Adrenal gland (tissue), 19 donors: ENCODE measurements at regions of chr11 and their contacts with region 1.

Region 1: DNA sequence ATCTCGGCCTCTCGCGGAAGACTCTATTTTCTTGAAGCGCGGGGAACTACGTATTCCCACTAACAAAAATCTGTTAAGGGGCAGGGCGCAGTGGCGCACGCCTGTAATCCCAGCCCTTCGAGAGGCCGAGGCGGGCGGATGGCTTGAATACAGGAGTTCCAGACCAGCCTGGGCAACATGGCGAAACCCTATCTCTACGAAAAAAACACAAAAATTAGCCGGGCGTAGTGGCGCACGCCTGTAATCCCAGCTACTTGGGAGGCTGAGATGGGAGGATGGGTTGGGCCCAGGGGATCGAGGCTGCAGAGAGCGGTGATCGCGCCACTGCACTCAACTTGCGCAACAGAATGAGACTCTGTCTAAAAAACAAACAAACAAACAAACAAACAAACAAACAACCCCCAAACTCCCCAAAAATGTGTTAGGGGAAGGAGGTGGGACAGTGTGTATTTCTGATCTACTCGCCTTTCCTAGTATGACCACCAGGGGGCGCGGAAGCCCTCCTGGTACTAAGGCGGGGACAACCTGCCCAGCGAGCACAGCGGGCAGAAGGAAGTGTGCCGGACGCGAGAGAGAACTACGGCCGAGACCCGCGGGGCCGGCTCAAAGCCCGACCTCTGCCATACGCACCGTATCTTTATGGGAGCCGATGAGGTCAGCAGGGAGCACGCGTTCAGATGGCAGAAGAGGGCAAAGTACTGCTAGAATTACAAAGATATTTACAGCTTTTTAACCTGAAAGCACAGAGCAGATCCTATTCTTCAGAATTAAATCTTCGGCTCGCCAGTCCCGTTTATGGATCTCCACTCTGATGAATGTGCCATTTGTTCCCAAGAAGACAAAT is 1.3 kb upstream of the STX3 start:
- DNase-seq: peak; percentile 82 to 93 (median 89)
- H3K4me3 ChIP-seq: peak overlapping the region in 3 of 4 donors; percentile 89 to 97 (median 92)
- H3K27ac ChIP-seq: peak overlapping the region in 3 of 5 donors; percentile 95 to 98 (median 97)
- H3K4me1 ChIP-seq: peaks cover 12 to 17% of the 10 kb centered on the region in 2 donors
- H3K27me3 ChIP-seq: no peaks in the 10 kb centered on the region
- CTCF ChIP-seq: peak; percentile 89 to 97 (median 95)
- POLR2A ChIP-seq: no peak

Region 2: DNA sequence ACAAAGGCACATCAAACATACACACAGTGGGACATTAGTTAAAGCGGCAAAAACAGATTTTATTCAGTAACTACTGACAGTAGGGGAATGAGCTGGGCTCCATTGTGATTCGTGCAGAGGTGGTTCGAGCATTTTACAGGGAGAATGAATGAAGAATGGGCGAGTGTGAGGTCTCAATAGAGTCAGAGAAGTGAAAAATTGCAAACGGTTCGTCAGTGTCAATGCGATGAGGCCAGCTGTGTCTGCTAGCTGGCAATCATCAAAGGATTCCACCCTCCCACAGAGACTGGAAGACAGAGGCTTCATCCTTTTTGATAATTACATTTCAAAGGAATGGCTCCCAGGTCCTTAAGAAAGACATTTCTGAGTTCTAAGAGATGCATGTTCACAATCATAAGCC is 225.2 kb before region 1 on chr11:
- intact Hi-C with region 1: no loop called
- DNase-seq: no peak
- H3K4me3 ChIP-seq: no peak overlapping the region
- H3K27ac ChIP-seq: no peak overlapping the region
- H3K4me1 ChIP-seq: no peaks in the 10 kb centered on the region
- H3K27me3 ChIP-seq: no peaks in the 10 kb centered on the region
- CTCF ChIP-seq: no peak
- POLR2A ChIP-seq: no peak

Region 3: DNA sequence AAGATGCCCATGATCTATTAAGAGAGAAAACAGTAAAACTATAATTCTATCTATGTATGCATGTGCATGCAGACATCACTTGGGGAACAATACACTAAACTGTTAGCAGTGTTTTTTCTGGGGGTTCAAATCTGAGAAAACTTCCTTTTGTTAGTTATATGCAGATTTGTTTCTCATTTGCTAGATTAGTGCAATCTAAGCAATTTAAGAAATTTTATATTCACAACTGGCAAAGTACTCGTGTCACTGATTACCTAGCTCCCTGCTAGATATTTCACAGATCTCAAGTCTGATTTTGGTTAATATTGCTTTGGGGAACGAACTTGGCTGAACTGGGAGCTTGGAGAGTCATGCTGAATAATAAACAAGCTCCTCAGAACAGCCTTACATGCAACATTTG is 123.4 kb before region 1 on chr11:
- intact Hi-C with region 1: no loop called
- DNase-seq: no peak
- H3K4me3 ChIP-seq: no peak overlapping the region
- H3K27ac ChIP-seq: no peak overlapping the region
- H3K4me1 ChIP-seq: no peaks in the 10 kb centered on the region
- H3K27me3 ChIP-seq: no peaks in the 10 kb centered on the region
- CTCF ChIP-seq: no peak
- POLR2A ChIP-seq: no peak

Region 4: DNA sequence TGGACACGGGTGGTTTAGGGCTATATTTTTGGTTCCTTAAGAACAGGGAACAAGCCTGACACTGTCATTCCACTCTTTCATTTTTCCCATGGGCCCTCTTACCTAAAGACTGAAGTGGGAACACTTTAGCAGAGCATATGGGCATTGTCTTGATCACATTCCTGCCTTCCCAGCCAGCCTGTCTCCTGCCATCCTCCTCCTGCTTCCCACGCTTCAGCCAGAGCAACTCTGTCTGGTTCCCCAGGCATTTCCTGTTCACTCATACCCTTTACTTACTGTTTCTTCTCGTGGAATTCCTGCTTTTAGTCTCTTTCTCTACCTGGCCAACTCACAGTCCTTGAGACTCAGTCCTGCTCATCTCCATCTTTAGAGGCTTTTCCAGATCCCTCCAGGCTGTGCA is 33.9 kb after region 1 on chr11:
- intact Hi-C with region 1: no loop called
- DNase-seq: no peak
- H3K4me3 ChIP-seq: no peak overlapping the region
- H3K27ac ChIP-seq: no peak overlapping the region
- H3K4me1 ChIP-seq: peaks cover 11% of the 10 kb centered on the region in 2 donors
- H3K27me3 ChIP-seq: no peaks in the 10 kb centered on the region
- CTCF ChIP-seq: no peak
- POLR2A ChIP-seq: no peak

Region 5: GRCh38 chr11:59802639-59803176 is 48.8 kb after region 1 on chr11:
- intact Hi-C with region 1: loop called (anchors 2 kb)
- DNase-seq: peak in 4 of 7 donors; percentile 38 to 63 (median 52)
- H3K4me3 ChIP-seq: no peak overlapping the region
- H3K27ac ChIP-seq: no peak overlapping the region
- H3K4me1 ChIP-seq: peaks cover 0 to 6% of the 10 kb centered on the region in 2 donors
- H3K27me3 ChIP-seq: no peaks in the 10 kb centered on the region
- CTCF ChIP-seq: peak; percentile 33 to 88 (median 71)
- POLR2A ChIP-seq: no peak

Region 6: GRCh38 chr11:59866397-59866796 is 112.5 kb after region 1 on chr11 and contains the start of gene TCN1:
- intact Hi-C with region 1: no loop called
- DNase-seq: no peak
- H3K4me3 ChIP-seq: no peak within 1 kb of the TSS
- H3K27ac ChIP-seq: no peak within 1 kb of the TSS
- H3K4me1 ChIP-seq: no peaks in the 10 kb centered on the region
- H3K27me3 ChIP-seq: no peaks in the 10 kb centered on the region
- CTCF ChIP-seq: no peak
- POLR2A ChIP-seq: no peak
- total RNA-seq, gene TCN1: 0.32 to 0.78 TPM in 2 of 9 donors, not detected in the others